ENCODE measurements at regions of chr15 and their contacts with region 1.

Region 1: GRCh38 chr15:85689729-85690128 is 105.0 kb downstream of the KLHL25 start:
- DNase-seq: peak; percentile 69
- H3K4me3 Mint-ChIP-seq: peak overlapping the region; percentile 96
- H3K27ac Mint-ChIP-seq: peak overlapping the region; percentile 99
- H3K4me1 Mint-ChIP-seq: peaks cover 74% of the 10 kb centered on the region
- H3K27me3 Mint-ChIP-seq: no peaks in the 10 kb centered on the region

Region 2: GRCh38 chr15:85625856-85626255 is 63.9 kb before region 1 on chr15:
- CTCF ChIA-PET with region 1: interaction called, 5 read pairs
- POLR2A ChIA-PET with region 1: interaction called, 69 read pairs
- DNase-seq: peak; percentile 51
- H3K4me3 Mint-ChIP-seq: peak overlapping the region; percentile 51
- H3K27ac Mint-ChIP-seq: peak overlapping the region; percentile 90
- H3K4me1 Mint-ChIP-seq: peaks cover 74% of the 10 kb centered on the region
- H3K27me3 Mint-ChIP-seq: no peaks in the 10 kb centered on the region

Region 3: DNA sequence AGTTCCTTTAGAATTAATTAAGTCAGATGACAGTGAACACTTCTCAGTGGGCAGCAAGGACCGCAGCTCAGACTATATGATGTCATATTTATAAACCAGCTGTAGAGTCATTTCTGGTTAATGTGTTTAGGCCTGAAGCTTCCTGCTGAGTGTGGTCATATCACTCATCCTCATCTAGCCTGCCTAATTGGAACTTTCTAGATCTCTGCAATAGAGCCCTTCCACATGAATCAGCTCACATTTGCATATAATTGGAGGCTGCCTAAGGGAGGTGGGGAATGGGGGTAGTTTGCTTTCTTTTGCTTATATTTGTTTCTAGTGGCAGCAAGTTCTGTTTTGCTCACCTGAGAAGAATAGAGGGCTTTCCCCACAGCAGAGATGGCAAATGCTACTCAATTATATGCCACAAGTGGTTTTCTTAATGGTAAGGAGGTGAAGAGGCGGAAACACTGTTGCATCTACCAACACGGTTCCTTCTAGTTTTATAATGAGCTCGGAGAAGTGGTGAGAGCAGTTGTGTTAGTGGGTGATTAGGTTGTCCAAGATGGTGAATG is 43.1 kb before region 1 on chr15:
- CTCF ChIA-PET with region 1: interaction called, 3 read pairs
- POLR2A ChIA-PET with region 1: interaction called, 36 read pairs
- DNase-seq: peak; percentile 49
- H3K4me3 Mint-ChIP-seq: peak overlapping the region; percentile 17
- H3K27ac Mint-ChIP-seq: peak overlapping the region; percentile 80
- H3K4me1 Mint-ChIP-seq: peaks cover 53% of the 10 kb centered on the region
- H3K27me3 Mint-ChIP-seq: no peaks in the 10 kb centered on the region

Region 4: DNA sequence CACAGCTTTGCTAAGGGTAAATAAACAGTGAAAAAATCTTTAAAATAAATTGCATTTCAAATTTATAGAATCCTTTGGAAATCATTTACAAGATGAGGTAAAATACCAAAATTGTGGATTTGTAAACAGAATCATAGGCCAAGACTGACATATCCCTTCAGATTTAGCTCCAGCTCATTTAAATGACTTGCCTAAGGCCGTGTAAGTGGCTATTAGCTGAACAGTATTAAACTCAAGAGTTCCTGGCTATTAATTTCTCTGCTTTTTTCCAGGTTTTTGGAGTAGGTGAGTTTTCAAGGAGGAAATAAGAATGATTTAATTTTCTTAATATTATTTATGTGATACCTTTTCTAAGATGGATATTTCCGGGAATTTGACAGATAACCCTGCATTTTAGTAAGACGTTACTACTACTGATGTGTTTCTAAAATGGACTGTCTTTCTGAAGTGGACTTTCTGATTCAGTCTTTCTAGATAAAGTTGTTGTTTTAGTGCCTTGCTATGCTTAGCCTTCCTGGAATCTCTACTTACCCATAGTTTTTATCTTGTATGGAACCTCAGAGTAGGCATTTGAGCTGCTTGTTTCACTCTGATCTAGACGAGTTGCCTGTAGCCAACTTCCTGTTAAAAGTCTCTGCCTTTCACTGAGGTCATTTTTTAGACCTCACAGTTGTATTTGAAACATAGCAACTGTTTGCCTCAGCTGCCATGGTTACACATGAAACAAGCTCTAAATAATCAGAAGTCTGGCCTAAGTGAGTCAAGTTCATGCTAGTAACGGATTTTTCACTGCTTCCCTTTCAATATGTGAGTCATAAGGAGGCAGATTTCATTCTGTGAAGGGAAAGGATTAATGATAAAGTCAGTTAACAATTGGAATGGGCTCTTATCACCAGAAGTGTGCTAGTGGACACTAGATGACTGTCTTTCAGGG is 22.0 kb before region 1 on chr15:
- CTCF ChIA-PET with region 1: no interaction called
- POLR2A ChIA-PET with region 1: interaction called, 32 read pairs
- DNase-seq: peak; percentile 61
- H3K4me3 Mint-ChIP-seq: peak overlapping the region; percentile 2
- H3K27ac Mint-ChIP-seq: peak overlapping the region; percentile 86
- H3K4me1 Mint-ChIP-seq: peaks cover 22% of the 10 kb centered on the region
- H3K27me3 Mint-ChIP-seq: no peaks in the 10 kb centered on the region

Region 5: GRCh38 chr15:85702321-85703101 is 12.8 kb after region 1 on chr15:
- CTCF ChIA-PET with region 1: interaction called, 46 read pairs
- POLR2A ChIA-PET with region 1: interaction called, 285 read pairs
- DNase-seq: peak; percentile 44
- H3K4me3 Mint-ChIP-seq: peak overlapping the region; percentile 69
- H3K27ac Mint-ChIP-seq: peak overlapping the region; percentile 88
- H3K4me1 Mint-ChIP-seq: peaks cover 60% of the 10 kb centered on the region
- H3K27me3 Mint-ChIP-seq: no peaks in the 10 kb centered on the region

Region 6: DNA sequence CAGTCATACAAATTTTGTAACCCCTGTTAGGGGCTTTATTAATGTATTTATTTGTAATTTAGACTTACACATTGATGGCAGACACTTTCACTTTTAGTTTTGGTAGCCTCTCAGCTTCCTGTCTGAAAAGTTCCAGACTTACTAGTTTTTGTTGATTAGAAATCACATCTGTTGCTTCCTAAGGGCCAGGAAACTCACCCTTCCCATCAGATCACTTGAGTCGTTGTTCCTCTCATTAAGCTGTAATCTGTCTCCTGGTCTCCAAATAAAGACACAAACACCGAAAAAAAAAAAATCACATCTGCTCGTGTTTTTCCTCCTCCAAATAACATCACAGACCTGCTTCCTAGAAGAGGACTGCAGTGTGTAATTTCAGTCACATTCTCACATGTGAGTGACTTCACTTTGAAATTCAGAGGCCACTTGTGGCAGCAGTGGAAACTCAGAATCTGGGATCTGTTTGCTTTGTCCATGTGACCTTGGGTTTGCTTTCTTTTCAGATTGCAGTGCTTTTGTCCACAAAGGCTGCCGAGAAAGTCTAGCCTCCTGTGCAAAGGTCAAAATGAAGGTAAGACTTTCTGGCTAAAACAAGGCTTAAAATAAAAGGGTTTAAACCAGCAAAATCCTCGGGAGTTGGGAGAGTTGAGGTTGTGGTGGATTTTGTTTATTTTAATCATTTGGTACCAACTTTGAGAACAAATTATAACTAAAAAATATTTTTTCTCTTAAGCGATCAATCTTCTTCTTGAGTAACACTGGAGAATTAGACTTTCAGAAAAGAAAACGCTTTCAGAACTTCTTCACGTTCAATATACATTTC is 18.0 kb after region 1 on chr15:
- CTCF ChIA-PET with region 1: interaction called, 46 read pairs
- POLR2A ChIA-PET with region 1: interaction called, 285 read pairs
- DNase-seq: no peak
- H3K4me3 Mint-ChIP-seq: peak overlapping the region; percentile 62
- H3K27ac Mint-ChIP-seq: peak overlapping the region; percentile 94
- H3K4me1 Mint-ChIP-seq: peaks cover 73% of the 10 kb centered on the region
- H3K27me3 Mint-ChIP-seq: no peaks in the 10 kb centered on the region

Region 7: DNA sequence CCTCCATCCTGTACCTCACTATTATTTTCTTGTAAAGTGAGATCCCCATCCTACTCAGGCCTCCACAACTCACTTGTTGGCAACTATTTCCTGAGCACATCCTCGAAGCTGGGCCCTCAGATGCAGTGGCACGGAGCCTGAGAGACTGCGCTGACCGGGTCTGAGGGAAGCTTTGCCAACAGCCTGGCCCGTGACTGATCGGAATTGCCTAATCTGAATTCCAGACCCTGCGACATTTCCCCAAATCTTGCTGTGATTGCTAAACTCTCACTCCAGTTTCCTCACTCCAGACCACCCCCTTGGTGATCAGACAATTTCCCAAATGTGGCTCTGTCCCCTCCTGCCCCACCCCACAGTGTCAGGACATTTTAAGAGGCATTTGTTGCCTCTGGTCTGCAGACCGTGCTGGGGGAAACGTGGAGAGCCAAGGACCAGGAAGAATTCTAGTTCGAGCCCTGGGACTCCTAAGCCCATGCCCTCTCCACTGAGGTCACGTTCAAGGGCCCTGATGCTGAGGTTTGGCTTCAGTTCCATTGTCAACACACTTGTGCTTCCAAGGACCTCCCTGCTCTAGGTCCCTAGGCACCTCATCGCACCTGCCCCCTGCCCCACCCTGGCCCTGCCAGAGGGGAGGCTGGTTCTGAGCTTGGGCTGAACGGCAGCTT is 82.2 kb after region 1 on chr15:
- CTCF ChIA-PET with region 1: no interaction called
- POLR2A ChIA-PET with region 1: no interaction called
- DNase-seq: no peak
- H3K4me3 Mint-ChIP-seq: no peak overlapping the region
- H3K27ac Mint-ChIP-seq: no peak overlapping the region
- H3K4me1 Mint-ChIP-seq: no peaks in the 10 kb centered on the region
- H3K27me3 Mint-ChIP-seq: no peaks in the 10 kb centered on the region

Region 8: DNA sequence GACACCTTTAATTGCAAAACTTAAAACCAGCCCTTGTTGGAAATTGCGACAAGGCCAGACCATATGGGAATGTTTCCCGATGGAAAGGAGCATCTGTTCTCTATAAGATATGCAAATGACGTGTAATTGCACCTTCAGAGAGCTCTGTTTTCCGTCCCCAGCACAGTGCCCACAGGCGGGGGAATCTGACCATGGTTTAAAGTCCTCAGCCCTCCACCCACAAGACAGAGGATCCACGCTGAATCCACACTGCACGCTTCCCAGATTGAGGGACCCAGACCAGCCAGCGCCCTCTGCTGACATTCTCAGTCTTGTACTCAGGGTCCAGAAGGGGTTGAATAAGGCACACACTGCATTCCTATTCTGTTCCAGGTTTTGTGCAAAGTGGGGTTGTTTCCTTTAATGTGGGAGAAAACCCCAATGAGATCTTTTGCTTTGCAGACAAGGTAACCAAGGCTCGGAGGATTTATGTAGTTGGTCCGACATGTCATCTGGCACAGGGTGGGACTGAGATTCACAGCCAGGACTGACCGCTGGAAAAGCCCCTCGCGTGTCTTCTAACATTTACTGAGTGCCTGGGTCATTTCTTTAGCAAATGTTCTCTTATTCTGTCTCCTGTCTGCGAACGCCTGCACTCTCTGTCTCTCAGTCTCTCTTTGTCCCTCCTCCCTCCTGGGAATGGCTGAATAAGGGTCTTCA is 141.8 kb after region 1 on chr15:
- CTCF ChIA-PET with region 1: no interaction called
- POLR2A ChIA-PET with region 1: no interaction called
- DNase-seq: peak; percentile 34
- H3K4me3 Mint-ChIP-seq: no peak overlapping the region
- H3K27ac Mint-ChIP-seq: no peak overlapping the region
- H3K4me1 Mint-ChIP-seq: no peaks in the 10 kb centered on the region
- H3K27me3 Mint-ChIP-seq: no peaks in the 10 kb centered on the region

Measured in activated CD4-positive, alpha-beta memory T cell treated with anti-CD3 and anti-CD28 coated beads, Interleukin-2, amount 10 ng/mL, durations not matched to agents 7 days and 5 days (primary cell).